CD8-positive, alpha-beta T cell (primary cell): ENCODE measurements at regions of chr22 and their contacts with region 1.

Region 1: GRCh38 chr22:24156913-24157821 is 24.1 kb upstream of the SUSD2 start:
- DNase-seq: peak; percentile 77 to 95 (median 91)
- ATAC-seq: peak; percentile 74
- H3K4me3 ChIP-seq: peak overlapping the region; percentile 98 to 99
- H3K4me3 Mint-ChIP-seq: peak overlapping the region; percentile 93
- H3K27ac ChIP-seq: peak overlapping the region; percentile 75 to 78
- H3K27ac Mint-ChIP-seq: peak overlapping the region; percentile 93
- H3K4me1 ChIP-seq: peaks cover 82% of the 10 kb centered on the region
- H3K4me1 Mint-ChIP-seq: peaks cover 84% of the 10 kb centered on the region
- H3K27me3 ChIP-seq: no peaks in the 10 kb centered on the region
- H3K27me3 Mint-ChIP-seq: no peaks in the 10 kb centered on the region
- CTCF ChIP-seq: peak; percentile 77

Region 2: DNA sequence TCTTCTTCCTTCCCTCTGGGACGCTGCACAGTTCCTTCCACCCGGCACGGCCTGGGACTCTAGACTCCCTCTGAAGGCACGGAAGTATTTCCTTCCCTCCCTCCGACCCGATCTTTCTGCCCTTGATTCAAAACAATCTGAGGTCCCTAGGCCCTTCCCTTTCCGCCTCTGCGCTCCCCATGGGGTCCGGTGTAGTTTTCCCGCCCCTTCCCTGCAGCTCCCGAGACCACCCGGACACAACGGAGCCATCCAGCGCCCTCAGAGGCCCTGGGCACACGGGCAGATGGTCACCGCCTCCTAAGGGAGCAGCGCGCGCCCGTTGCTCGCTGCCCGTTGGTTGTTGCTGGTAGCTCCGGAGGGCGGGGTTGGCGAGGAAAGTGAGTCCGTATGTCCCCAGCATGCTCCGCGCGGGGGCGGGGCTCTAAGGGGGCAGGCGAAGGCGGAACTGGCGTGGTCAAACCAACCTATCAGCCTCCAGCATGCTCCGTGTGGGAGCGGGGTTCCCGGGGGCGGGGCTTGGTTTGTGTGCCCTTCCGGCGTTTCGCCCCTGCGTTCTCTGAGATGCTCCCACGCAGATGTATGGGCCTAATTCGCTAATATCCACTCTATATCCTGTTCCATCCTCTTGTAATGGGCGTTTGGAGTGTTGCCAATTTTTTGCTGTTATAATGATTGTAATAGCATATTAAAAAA is 243.4 kb before region 1 on chr22:
- CTCF ChIA-PET with region 1: no interaction called
- POLR2A ChIA-PET with region 1: no interaction called
- intact Hi-C with region 1: loop called in 1 of 2 experiments (anchors 5 kb)
- DNase-seq: peak; percentile 97 to 99 (median 99)
- ATAC-seq: peak; percentile 99
- H3K4me3 ChIP-seq: peak overlapping the region; percentile 67 to 69
- H3K4me3 Mint-ChIP-seq: peak overlapping the region; percentile 89
- H3K27ac ChIP-seq: peak overlapping the region; percentile 62 to 80
- H3K27ac Mint-ChIP-seq: peak overlapping the region; percentile 96
- H3K4me1 ChIP-seq: no peaks in the 10 kb centered on the region
- H3K4me1 Mint-ChIP-seq: peaks cover 20% of the 10 kb centered on the region
- H3K27me3 ChIP-seq: no peaks in the 10 kb centered on the region
- H3K27me3 Mint-ChIP-seq: no peaks in the 10 kb centered on the region
- CTCF ChIP-seq: no peak

Region 3: DNA sequence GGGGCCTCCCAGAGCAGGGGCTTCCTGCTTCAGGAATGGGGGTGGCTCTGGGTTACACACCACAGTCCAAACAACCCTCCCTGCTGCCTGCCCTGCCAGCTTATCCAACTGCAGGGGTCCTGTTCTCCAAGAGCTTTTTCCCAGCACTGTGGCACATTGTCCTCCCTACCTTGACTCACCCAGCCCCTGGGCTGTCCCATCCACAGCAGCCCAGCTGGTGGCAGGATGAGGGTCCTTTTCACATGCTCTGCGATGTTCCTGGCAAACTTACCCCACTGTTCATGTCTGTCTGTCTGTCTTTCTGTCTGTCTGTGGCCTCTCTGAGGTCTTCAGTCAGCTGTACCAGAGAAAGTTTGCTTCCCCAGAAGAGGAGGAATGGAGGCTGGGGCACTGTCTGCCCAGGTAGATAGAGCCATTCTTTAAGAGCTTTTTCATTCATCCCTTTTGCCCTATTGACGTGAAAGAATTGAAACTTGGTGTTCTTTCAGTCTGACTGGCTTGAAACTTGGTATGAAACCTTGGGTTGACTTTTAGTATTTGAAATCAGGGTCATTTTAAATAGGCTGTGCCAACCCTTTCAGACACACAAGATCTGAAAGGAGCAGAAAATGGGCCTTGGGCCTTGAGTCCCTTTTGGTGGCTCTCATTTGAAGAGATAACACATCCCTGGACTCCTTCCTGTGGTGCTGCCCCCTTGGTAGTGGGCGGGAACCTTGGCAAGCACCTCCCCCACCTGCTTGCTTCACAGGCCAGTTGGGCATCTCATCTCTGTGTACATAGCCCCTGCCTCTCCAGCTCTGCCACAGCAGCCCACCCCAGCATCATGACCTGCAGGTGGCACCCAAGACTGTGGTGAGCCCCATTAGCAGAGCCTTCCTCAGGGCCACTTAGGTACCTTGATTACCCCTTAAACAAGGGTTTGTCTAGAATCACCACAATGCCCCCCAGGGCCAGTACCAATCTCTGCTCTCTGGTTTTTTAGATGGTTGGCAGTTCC is 50.5 kb before region 1 on chr22:
- CTCF ChIA-PET with region 1: interaction called, 13 read pairs
- POLR2A ChIA-PET with region 1: no interaction called
- intact Hi-C with region 1: no loop called
- DNase-seq: peak; percentile 16 to 64 (median 45)
- ATAC-seq: peak; percentile 55
- H3K4me3 ChIP-seq: no peak overlapping the region
- H3K4me3 Mint-ChIP-seq: no peak overlapping the region
- H3K27ac ChIP-seq: no peak overlapping the region
- H3K27ac Mint-ChIP-seq: peak overlapping the region; percentile 52
- H3K4me1 ChIP-seq: no peaks in the 10 kb centered on the region
- H3K4me1 Mint-ChIP-seq: peaks cover 2% of the 10 kb centered on the region
- H3K27me3 ChIP-seq: no peaks in the 10 kb centered on the region
- H3K27me3 Mint-ChIP-seq: no peaks in the 10 kb centered on the region
- CTCF ChIP-seq: no peak

Region 4: GRCh38 chr22:24146194-24146616 is 11.0 kb before region 1 on chr22:
- CTCF ChIA-PET with region 1: interaction called, 273 read pairs
- POLR2A ChIA-PET with region 1: interaction called, 189 read pairs
- intact Hi-C with region 1: loop called in 1 of 2 experiments (anchors 1 kb)
- DNase-seq: peak in 6 of 9 experiments; percentile 34 to 74 (median 46)
- ATAC-seq: peak; percentile 67
- H3K4me3 ChIP-seq: no peak overlapping the region
- H3K4me3 Mint-ChIP-seq: peak overlapping the region; percentile 54
- H3K27ac ChIP-seq: peak overlapping the region in 1 of 2 experiments; percentile 61
- H3K27ac Mint-ChIP-seq: peak overlapping the region; percentile 74
- H3K4me1 ChIP-seq: peaks cover 93% of the 10 kb centered on the region
- H3K4me1 Mint-ChIP-seq: peaks cover 92% of the 10 kb centered on the region
- H3K27me3 ChIP-seq: no peaks in the 10 kb centered on the region
- H3K27me3 Mint-ChIP-seq: no peaks in the 10 kb centered on the region
- CTCF ChIP-seq: no peak

Region 5: DNA sequence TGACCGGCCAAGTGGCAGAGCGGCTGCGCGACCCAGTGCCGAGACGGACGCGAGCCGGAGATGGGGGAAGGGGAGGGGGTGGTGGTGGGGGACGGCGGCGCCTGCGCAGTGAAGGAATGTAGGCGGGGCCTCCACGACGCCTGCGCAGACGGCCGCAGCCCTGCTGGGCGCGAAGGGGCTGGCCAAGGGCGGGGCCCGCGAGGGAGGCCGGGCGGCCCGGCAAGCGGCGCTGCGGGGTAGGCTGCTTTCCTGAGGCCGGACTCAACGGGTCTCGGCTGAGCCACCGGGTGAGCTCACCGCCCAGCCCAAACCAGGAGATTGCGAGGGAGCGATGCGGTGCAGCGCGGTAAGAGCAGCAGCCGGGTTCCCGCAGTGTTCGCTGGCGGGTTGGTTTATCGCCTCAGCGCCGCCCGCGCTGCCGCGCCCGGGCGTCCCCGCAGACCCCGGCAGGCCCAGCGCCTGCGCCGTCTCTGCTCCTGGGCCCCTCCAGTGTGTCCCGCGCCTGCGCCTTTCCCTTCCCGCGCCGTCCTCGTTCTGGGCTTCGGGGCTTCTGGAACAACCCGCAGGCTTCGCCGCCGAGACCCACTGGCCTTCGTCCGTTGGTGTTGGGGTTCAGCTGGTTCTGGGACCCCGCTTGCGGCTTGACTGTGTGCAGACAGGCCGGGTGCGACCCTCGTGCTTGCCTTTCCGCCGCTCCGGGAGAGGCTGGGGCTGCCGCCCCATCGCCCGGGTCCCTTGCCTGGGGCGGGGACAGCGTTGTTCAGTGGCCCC is 113.7 kb after region 1 on chr22 and contains the start of gene SPECC1L:
- CTCF ChIA-PET with region 1: no interaction called
- POLR2A ChIA-PET with region 1: no interaction called
- intact Hi-C with region 1: loop called in 1 of 2 experiments (anchors 2 kb)
- DNase-seq: peak; percentile 81 to 97 (median 90)
- ATAC-seq: peak; percentile 91
- H3K4me3 ChIP-seq: peak within 1 kb of the TSS; percentile 91 to 95
- H3K4me3 Mint-ChIP-seq: peak within 1 kb of the TSS; percentile 88
- H3K27ac ChIP-seq: peak within 1 kb of the TSS; percentile 75 to 77
- H3K27ac Mint-ChIP-seq: peak within 1 kb of the TSS; percentile 87
- H3K4me1 ChIP-seq: peaks cover 19% of the 10 kb centered on the region
- H3K4me1 Mint-ChIP-seq: peaks cover 36% of the 10 kb centered on the region
- H3K27me3 ChIP-seq: no peaks in the 10 kb centered on the region
- H3K27me3 Mint-ChIP-seq: no peaks in the 10 kb centered on the region
- CTCF ChIP-seq: no peak
- total RNA-seq, gene SPECC1L: 24.7 to 28.6 TPM

Region 6: GRCh38 chr22:24433813-24434470 is 276.8 kb after region 1 on chr22:
- CTCF ChIA-PET with region 1: interaction called, 3 read pairs
- POLR2A ChIA-PET with region 1: no interaction called
- intact Hi-C with region 1: loop called in 1 of 2 experiments (anchors 5 kb)
- DNase-seq: no peak
- ATAC-seq: peak; percentile 53
- H3K4me3 ChIP-seq: peak overlapping the region in 1 of 2 experiments; percentile 6
- H3K4me3 Mint-ChIP-seq: peak overlapping the region; percentile 73
- H3K27ac ChIP-seq: peak overlapping the region; percentile 55 to 92
- H3K27ac Mint-ChIP-seq: peak overlapping the region; percentile 94
- H3K4me1 ChIP-seq: peaks cover 99% of the 10 kb centered on the region
- H3K4me1 Mint-ChIP-seq: peaks cover 90% of the 10 kb centered on the region
- H3K27me3 ChIP-seq: no peaks in the 10 kb centered on the region
- H3K27me3 Mint-ChIP-seq: no peaks in the 10 kb centered on the region
- CTCF ChIP-seq: no peak